H1 (cell line): ENCODE measurements at regions of chr13 and their contacts with region 1.

Region 1: DNA sequence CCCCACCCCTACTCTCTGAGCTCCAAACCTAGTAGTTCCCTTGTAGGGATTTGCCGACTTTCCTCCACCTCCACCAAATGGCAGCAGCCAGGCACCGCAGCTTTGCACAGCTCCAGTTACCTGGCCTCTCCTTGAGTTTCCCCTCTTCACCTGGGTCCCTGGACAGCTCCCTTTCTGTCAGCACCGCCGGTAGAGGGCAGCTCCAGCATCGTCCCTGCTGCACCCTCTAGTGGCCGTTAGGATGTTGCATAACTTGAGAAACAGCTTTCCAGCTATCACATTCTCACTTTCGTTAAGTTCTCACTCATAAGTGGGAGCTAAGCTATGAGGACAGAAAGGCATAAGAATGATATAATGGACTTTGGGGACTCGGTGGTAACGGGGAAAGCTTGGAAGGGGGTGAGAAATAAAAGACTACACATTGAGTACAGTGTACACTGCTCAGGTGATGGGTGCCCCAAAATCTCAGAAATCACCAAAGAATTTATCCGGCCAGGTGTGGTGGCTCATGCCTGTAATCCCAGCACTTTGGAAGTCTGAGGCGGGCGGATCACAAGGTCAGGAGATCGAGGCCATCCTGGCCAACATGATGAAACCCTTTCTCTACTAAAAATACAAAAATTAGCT is 60.4 kb upstream of the OLFM4 start:
- DNase-seq: peak; percentile 86 to 90
- H3K4me3 ChIP-seq: no peak overlapping the region
- H3K27ac ChIP-seq: no peak overlapping the region
- H3K4me1 ChIP-seq: peaks cover 0 to 4% (median 3%) of the 10 kb centered on the region in 4 experiments; a peak in 4 of 7 replicates
- H3K27me3 ChIP-seq: no peaks in the 10 kb centered on the region; a peak in 2 of 7 replicates
- CTCF ChIP-seq: peak; percentile 85 to 99 (median 99)
- EP300 ChIP-seq: no peak
- POLR2A ChIP-seq: no peak
- RAD21 ChIP-seq: peak; percentile 97 to 99

Region 2: GRCh38 chr13:52809310-52809769 is 158.8 kb before region 1 on chr13:
- CTCF ChIA-PET with region 1: interaction called, 10 read pairs
- POLR2A ChIA-PET with region 1: no interaction called
- DNase-seq: peak; percentile 61 to 88
- H3K4me3 ChIP-seq: no peak overlapping the region
- H3K27ac ChIP-seq: no peak overlapping the region
- H3K4me1 ChIP-seq: peaks cover 0 to 6% (median 4%) of the 10 kb centered on the region in 4 experiments; a peak in 4 of 7 replicates
- H3K27me3 ChIP-seq: no peaks in the 10 kb centered on the region
- CTCF ChIP-seq: peak; percentile 85 to 91 (median 86)
- EP300 ChIP-seq: no peak
- POLR2A ChIP-seq: no peak
- RAD21 ChIP-seq: peak; percentile 96 to 97

Region 3: DNA sequence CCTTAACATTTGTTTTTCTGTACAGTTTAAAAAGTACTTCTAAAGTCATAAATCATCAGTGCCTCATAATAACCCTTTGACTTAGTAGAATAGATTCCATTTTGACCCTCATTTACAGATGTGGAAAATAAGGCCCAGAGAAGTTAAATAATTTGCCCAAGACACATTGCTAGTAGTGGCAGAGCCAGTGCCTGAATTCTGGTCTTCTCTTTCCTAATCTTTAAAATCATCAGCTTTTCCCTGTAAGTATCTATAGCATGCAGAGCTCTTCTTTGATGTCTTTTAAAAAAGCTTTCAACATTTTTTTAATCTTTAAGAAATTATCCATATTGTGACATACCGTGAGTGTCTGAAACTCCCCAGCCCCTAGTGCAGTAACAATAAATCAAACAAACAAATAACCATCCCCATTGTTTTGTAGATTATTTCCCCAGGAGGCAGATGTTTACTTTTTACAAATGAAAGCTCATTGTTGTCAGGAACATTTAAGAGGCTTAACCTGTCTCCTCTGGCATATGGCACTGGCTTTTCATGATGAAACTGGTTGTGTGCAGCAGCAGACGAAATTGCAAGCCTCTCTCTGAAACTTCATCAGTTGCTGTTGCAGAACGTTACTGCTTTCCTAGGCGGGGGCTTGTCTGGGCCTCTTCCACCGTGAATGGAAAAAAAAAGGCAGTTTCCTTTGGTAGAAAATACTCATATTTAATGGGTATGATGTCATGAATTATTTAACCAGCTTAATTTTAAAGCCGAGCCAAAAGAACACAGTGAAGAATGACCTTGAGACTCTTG is 88.0 kb before region 1 on chr13:
- CTCF ChIA-PET with region 1: interaction called, 15 read pairs
- POLR2A ChIA-PET with region 1: interaction called, 4 read pairs
- DNase-seq: peak in 1 of 2 experiments; percentile 29
- H3K4me3 ChIP-seq: peak overlapping the region in 1 of 4 experiments; percentile 44; a peak in 2 of 8 replicates
- H3K27ac ChIP-seq: no peak overlapping the region
- H3K4me1 ChIP-seq: peaks cover 8 to 25% (median 21%) of the 10 kb centered on the region in 4 experiments
- H3K27me3 ChIP-seq: peaks cover 6 to 27% (median 23%) of the 10 kb centered on the region in 4 experiments
- CTCF ChIP-seq: no peak
- EP300 ChIP-seq: peak in 1 of 2 experiments; percentile 89; a peak in 1 of 3 replicates
- POLR2A ChIP-seq: no peak
- RAD21 ChIP-seq: no peak

Region 4: DNA sequence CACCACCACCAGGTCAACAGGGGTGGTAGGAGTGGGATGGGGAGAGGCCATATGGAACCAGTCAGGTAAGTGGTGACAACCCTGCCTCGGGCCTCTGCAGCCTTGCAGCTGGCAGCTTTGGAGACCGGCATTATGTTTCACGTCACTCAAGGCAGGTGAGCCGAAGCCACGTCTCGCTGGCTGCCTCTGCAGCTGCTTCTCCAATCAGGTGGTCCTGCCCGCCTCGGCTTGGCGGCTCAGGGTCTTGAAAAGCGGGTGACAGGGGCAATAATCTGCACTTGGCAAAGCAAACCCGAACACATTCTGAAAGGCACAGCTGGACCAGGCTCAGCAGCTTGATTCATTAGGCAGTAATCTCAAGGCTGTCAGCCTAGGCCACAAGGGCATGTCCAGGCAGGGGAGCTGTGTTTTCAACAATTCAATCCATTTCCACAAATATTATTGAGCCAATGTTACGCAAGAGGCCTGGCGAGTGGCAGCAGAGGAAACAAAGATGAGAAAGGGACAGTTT is 42.4 kb before region 1 on chr13:
- CTCF ChIA-PET with region 1: interaction called, 12 read pairs
- POLR2A ChIA-PET with region 1: no interaction called
- DNase-seq: no peak
- H3K4me3 ChIP-seq: no peak overlapping the region
- H3K27ac ChIP-seq: no peak overlapping the region
- H3K4me1 ChIP-seq: peaks cover 0 to 4% (median 0%) of the 10 kb centered on the region in 4 experiments; a peak in 3 of 7 replicates
- H3K27me3 ChIP-seq: no peaks in the 10 kb centered on the region
- CTCF ChIP-seq: no peak
- EP300 ChIP-seq: no peak
- POLR2A ChIP-seq: no peak
- RAD21 ChIP-seq: no peak

Region 5: GRCh38 chr13:52980695-52981094 is 12.5 kb after region 1 on chr13:
- CTCF ChIA-PET with region 1: interaction called, 30 read pairs
- POLR2A ChIA-PET with region 1: no interaction called
- DNase-seq: no peak
- H3K4me3 ChIP-seq: no peak overlapping the region
- H3K27ac ChIP-seq: no peak overlapping the region
- H3K4me1 ChIP-seq: no peaks in the 10 kb centered on the region
- H3K27me3 ChIP-seq: no peaks in the 10 kb centered on the region
- CTCF ChIP-seq: no peak
- EP300 ChIP-seq: no peak
- POLR2A ChIP-seq: no peak
- RAD21 ChIP-seq: no peak

Region 6: GRCh38 chr13:53151336-53152056 is 183.3 kb after region 1 on chr13:
- CTCF ChIA-PET with region 1: interaction called, 50 read pairs
- POLR2A ChIA-PET with region 1: no interaction called
- DNase-seq: peak; percentile 27 to 78
- H3K4me3 ChIP-seq: no peak overlapping the region
- H3K27ac ChIP-seq: no peak overlapping the region
- H3K4me1 ChIP-seq: no peaks in the 10 kb centered on the region
- H3K27me3 ChIP-seq: no peaks in the 10 kb centered on the region
- CTCF ChIP-seq: peak; percentile 45 to 93 (median 86)
- EP300 ChIP-seq: no peak
- POLR2A ChIP-seq: no peak
- RAD21 ChIP-seq: peak; percentile 94 to 95